Activated CD4-positive, alpha-beta memory T cell treated with anti-CD3 and anti-CD28 coated beads for 36 hours (primary cell): ENCODE measurements at regions of chrX and their contacts with region 1.

Region 1: GRCh38 chrX:109880629-109881028 is 122.3 kb upstream of the TMEM164 start:
- DNase-seq: no peak
- H3K4me3 Mint-ChIP-seq: no peak overlapping the region
- H3K27ac Mint-ChIP-seq: no peak overlapping the region
- H3K4me1 Mint-ChIP-seq: no peaks in the 10 kb centered on the region
- H3K27me3 Mint-ChIP-seq: peaks cover 3% of the 10 kb centered on the region

Region 2: GRCh38 chrX:109890895-109891502 is 10.4 kb after region 1 on chrX:
- CTCF ChIA-PET with region 1: interaction called, 11 read pairs
- POLR2A ChIA-PET with region 1: no interaction called
- intact Hi-C with region 1: no loop called
- DNase-seq: peak; percentile 52
- H3K4me3 Mint-ChIP-seq: no peak overlapping the region
- H3K27ac Mint-ChIP-seq: no peak overlapping the region
- H3K4me1 Mint-ChIP-seq: no peaks in the 10 kb centered on the region
- H3K27me3 Mint-ChIP-seq: no peaks in the 10 kb centered on the region